ENCODE measurements at regions of chr9 and their contacts with region 1.

Region 1: GRCh38 chr9:127541877-127542276 is 70.2 kb upstream of the STXBP1 start:
- DNase-seq: no peak
- H3K4me3 ChIP-seq: no peak overlapping the region
- H3K27ac ChIP-seq: no peak overlapping the region
- H3K4me1 ChIP-seq: peaks cover 0 to 60% (median 22%) of the 10 kb centered on the region in 4 experiments
- H3K27me3 ChIP-seq: no peaks in the 10 kb centered on the region

Region 2: DNA sequence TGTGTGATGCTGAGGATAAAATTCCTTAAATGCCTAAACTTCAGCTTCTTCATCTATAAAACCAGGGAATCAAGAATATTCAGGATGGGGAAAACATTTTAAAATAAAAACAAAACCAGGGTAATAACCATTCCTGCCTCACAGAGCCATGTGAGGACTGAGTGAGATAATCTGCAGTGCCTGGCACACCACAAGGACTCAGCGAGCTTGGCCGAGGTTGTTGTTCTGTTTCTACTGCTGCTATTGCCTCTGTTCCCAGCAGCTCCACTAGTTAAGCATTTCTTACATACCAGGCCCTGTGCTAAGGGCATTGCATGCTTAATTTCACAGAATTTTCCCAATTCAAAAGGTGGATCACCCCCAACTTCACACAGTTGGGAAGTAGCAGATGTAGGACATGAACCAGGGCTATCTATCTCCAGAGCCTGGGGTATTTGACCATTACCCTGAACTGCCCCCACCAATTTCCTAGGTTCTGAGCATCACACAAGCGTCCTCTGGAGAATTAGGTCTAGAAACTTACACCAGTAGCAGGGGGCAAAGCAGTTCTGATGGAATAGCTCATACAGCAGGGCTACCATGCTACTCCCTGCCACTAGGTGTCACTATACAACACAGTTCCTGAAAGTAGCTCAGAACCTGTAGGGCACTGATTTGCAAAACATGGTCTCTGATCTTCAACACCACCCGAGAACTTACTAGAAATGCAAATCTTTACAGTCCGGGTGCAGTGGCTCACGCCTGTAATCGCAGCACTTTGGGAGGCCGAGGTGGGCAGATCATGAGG is 16.3 kb before region 1 on chr9:
- CTCF ChIA-PET with region 1: interaction called, 10 read pairs
- POLR2A ChIA-PET with region 1: no interaction called
- DNase-seq: peak; percentile 14 to 51 (median 45)
- H3K4me3 ChIP-seq: no peak overlapping the region
- H3K27ac ChIP-seq: no peak overlapping the region
- H3K4me1 ChIP-seq: peaks cover 0 to 7% (median 3%) of the 10 kb centered on the region in 4 experiments
- H3K27me3 ChIP-seq: no peaks in the 10 kb centered on the region